ENCODE measurements at regions of chr22 and their contacts with region 1.

Region 1: DNA sequence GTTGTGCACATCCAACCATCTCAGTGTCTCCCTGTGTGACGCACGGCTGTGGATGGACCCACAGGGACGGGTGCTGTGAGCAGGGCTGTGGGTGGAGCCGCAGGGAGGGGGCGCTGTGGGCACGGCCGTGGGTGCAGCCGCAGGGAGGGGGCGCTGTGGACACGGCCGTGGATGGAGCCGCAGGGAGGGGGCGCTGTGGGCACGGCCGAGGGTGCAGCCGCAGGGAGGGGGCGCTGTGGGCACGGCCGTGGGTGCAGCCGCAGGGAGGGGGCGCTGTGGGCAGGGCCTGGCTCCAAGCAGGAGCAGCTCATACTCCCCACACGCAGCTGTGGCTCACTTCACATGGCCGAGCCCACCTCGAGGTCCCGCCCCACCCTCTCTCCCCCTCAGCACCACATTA is 6.0 kb upstream of the MAPK11 start:
- DNase-seq: peak; percentile 53

Region 2: GRCh38 chr22:50326959-50327710 is 51.0 kb after region 1 on chr22 and contains the start of gene DENND6B:
- in situ Hi-C with region 1: loop called (anchors 10 kb)
- DNase-seq: peak; percentile 64

Region 3: GRCh38 chr22:50348058-50348457 is 71.9 kb after region 1 on chr22:
- in situ Hi-C with region 1: no loop called
- DNase-seq: no peak

Region 4: DNA sequence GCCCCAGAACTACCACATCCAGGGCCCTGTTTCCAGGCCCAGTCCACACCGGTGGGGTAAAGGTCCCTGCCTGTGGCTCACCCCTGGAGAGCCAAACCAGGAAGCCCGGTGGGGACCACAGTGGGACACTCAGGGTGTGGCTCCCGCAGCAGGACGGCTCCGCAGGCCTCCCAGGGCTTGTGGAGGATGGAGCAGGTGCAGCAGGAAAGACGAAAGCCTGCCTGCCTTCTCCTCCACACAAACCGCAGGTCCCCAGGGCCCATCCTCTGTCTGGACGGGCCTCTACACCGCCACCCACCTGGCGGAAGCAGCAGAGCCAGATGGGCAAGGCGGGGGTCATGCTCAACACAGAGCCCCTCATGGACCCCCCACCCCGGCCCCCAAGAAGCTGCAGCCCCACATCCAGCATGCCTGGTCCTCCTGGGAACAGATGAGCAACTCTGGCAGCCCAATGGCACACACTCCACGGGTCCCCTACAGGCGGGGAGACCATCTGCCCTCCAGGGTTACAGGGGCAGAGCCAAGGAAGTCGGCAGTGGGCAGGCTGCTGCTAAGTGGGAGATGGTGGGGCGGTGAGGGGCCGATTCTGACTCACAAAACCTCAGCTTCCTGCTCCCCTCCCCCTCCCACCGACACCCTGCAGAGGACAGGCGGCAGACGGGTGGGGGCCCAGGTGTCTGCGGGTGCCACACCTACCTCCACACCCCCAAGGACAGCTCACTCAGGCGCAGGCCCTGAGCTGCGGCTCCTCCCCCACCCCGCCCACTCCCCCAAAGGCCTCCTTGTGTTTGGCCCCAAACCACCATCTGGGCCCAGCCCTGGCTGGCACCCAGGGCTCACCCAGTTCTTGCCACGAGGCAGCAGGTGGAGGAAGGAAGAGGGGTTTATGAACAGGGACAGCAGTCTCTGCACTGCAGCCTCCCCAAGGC is 193.5 kb after region 1 on chr22:
- in situ Hi-C with region 1: no loop called
- DNase-seq: peak; percentile 94

Measured in KBM-7 (cell line).